ENCODE measurements at regions of chr7 and their contacts with region 1.

Region 1: DNA sequence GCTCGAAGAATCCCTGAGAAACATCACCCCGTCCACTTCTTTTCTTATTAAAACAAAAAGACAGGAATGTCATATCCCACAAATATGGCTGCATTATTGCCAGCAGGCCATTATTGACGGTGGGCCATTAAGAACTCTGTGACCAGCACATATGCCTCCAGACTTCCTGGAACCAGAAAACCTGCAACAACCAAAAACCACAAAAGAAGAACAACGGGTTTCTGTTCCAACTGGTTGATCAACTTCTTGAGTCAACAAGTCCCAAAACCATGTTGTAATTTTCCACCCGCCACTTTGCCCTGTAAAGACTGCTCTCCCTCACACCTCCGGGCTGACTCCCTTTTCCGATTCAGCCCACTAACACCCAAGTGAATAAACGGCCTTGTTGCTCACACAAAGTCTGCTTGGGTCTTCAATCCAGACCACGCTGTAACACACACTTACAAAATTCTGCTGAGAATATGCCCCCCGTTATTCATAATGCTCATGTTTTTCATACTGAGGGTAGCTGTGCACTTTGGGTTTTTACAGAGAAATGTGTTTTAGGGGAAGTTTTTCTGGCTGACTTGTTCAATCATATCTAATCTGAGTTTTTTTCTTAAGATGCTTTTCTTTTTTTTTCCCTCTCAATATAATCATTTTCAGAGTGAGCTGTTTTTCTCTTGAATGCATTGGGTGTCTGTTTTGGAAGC is 20.7 kb downstream of the ZNF107 start:
- DNase-seq: peak; percentile 93
- H3K4me3 ChIP-seq: peak overlapping the region; percentile 57
- H3K27ac ChIP-seq: peak overlapping the region; percentile 99
- H3K4me1 ChIP-seq: peaks cover 98% of the 10 kb centered on the region
- CTCF ChIP-seq: no peak

Region 2: GRCh38 chr7:64307254-64308015 is 379.2 kb before region 1 on chr7:
- CTCF ChIA-PET with region 1: no interaction called
- POLR2A ChIA-PET with region 1: no interaction called
- intact Hi-C with region 1: loop called (anchors 5 kb)
- DNase-seq: peak; percentile 98
- H3K4me3 ChIP-seq: peak overlapping the region; percentile 91
- H3K27ac ChIP-seq: peak overlapping the region; percentile 91
- H3K4me1 ChIP-seq: peaks cover 38% of the 10 kb centered on the region
- CTCF ChIP-seq: no peak

Region 3: DNA sequence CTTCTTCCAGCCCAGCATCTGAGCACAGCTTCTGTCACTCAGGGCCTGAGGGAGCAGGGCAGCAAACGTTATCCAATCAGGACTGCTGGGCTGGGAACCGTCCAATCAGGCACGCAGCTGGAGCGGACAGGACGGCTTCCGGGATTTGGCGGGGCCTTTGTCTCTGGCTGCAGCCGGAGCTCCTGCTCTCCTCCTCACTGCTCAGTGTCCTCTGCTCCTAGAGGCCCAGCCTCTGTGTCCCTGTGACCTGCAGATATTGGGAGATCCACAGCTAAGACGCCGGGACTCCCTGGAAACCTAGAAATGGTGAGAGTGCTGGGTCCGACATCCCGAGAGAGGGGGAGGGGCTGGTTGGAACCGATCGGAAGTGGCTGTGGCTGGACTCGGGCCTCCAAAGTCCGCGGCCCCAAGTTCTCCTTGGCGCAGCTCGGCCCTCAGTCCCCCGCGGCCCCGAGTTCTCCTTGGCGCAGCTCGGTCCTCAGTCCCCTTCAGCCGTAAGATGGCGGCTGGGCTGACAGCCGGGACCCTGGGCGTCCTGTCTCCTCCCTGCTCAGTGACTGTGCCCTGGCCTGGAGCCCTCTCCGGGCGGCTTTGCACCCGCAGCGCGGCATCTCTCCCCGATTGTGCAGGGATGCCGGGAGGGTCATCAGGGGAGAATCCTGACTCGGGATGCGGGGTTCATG is 20.5 kb before region 1 on chr7 and contains the start of gene ZNF107:
- CTCF ChIA-PET with region 1: interaction called, 5 read pairs
- POLR2A ChIA-PET with region 1: interaction called, 45 read pairs
- intact Hi-C with region 1: loop called (anchors 1 kb)
- DNase-seq: peak; percentile 95
- H3K4me3 ChIP-seq: peak within 1 kb of the TSS; percentile 93
- H3K27ac ChIP-seq: peak within 1 kb of the TSS; percentile 89
- H3K4me1 ChIP-seq: peaks cover 30% of the 10 kb centered on the region
- CTCF ChIP-seq: no peak
- total RNA-seq, gene ZNF107: 63.3 and 68.9 TPM in 2 replicates

Region 4: DNA sequence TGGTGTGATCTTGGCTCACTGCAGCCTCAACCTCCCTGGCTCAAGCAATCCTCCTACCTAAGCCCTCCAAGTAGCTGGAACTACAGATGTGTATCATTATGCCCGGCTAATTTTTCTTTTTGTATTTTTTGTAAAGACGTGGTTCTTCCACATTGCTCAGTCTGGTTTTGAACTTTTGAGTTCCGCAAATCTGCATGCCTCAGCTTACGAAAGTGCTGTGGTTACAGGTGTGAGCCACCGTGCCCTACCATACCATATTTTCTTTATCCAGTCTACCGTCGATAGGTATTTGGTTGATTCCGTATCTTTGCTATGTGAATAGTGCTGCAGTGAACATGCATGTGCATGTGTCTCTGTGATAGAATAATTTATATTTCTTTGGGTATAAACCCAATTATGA is 14.2 kb before region 1 on chr7:
- CTCF ChIA-PET with region 1: interaction called, 5 read pairs
- POLR2A ChIA-PET with region 1: interaction called, 105 read pairs
- intact Hi-C with region 1: loop called (anchors 1 kb)
- DNase-seq: peak; percentile 80
- H3K4me3 ChIP-seq: peak overlapping the region; percentile 93
- H3K27ac ChIP-seq: peak overlapping the region; percentile 89
- H3K4me1 ChIP-seq: peaks cover 66% of the 10 kb centered on the region
- CTCF ChIP-seq: no peak

Region 5: DNA sequence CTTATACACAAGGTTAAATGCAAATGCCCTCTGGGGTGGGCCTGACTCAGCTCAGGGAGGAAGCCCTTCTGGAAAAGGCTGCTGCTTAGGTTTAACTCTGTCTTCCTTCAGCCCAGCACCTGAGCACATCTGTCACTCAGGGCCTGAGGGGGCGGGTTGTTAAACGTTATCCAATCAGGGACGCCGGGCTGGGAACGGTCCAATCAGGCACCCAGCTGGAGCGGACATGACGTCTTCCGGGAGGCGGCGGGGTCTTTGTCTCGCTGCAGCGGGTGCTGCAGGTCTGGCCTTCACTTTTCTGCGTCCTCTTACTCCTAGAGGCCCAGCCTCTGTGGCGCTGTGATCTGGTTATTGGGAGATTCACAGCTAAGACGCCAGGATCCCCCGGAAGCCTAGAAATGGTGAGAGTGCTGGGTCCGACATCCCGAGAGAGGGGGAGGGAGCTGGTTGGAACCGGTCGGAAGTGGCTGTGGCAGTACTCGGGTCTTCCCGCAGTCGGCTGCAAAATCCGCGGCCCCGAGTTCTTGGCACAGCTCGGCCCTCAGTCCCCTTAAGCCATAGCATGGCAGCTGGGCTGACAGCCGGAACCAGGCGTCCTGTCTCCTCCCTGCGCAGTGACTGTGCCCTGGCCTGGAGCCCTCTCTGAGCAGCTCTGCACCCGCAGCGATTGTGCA is 107.7 kb after region 1 on chr7 and contains the start of gene ZNF138:
- CTCF ChIA-PET with region 1: no interaction called
- POLR2A ChIA-PET with region 1: interaction called, 16 read pairs
- intact Hi-C with region 1: no loop called
- DNase-seq: peak; percentile 98
- H3K4me3 ChIP-seq: peak within 1 kb of the TSS; percentile 99
- H3K27ac ChIP-seq: peak within 1 kb of the TSS; percentile 85
- H3K4me1 ChIP-seq: peaks cover 29% of the 10 kb centered on the region
- CTCF ChIP-seq: no peak
- total RNA-seq, gene ZNF138: 24.4 and 25.6 TPM in 2 replicates

Region 6: DNA sequence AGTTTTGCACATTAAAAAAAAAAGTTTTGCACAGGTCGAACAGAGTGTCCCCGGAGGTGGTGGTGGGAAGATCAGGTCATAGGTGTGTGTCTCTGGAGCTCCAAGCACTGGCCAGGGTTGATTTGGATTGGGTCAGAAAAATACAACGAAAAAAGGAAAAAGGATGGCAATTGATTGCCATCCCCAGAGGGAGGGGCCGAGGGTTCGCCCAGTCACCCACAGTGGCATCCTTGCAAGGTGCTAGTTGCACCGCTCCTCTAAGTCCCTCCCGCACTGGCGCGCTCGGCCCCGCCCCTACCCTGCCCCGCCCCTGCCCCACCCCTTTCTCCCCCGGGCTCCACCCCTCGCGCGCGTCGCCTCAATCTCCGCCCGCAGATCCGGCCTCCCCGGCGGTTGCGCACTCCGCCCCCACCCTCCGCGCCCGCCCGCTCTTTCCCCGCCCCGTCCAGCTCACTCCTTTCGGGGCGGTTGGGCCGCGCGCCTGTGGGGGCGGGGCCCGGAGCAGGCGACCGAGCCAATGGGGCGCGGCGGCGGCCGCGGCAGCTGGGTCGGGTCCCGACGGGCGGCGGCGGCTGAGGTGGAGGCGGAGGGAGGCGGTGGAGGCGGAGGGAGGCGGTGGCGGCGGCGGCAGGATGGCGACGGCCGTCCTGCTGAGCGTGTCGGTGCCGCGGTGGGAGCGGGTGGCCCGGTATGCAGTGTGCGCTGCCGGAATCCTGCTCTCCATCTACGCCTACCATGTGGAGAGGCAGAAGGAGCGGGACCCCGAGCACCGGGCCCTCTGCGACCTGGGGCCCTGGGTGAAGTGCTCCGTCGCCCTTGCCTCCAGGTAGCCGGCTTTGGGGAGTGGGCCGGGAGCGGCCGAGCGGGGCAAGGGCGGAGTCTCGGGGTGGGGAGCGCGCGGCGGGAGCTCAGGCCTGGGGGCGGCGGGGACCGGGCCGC is 351.4 kb after region 1 on chr7:
- CTCF ChIA-PET with region 1: no interaction called
- POLR2A ChIA-PET with region 1: no interaction called
- intact Hi-C with region 1: loop called (anchors 10 kb)
- DNase-seq: peak; percentile 94
- H3K4me3 ChIP-seq: peak overlapping the region; percentile 86
- H3K27ac ChIP-seq: peak overlapping the region; percentile 54
- H3K4me1 ChIP-seq: peaks cover 26% of the 10 kb centered on the region
- CTCF ChIP-seq: peak; percentile 59

Measured in OCI-LY7 (cell line).